ENCODE measurements at regions of chr19 and their contacts with region 1.

Region 1: GRCh38 chr19:39532233-39533002 is at the start of gene EID2B:
- DNase-seq: peak; percentile 91 to 97 (median 93)
- H3K4me3 ChIP-seq: peak within 1 kb of the TSS; percentile 95
- H3K4me3 Mint-ChIP-seq: peak within 1 kb of the TSS; percentile 89 to 100 (median 93)
- H3K27ac ChIP-seq: peak within 1 kb of the TSS; percentile 73
- H3K27ac Mint-ChIP-seq: peak within 1 kb of the TSS; percentile 79 to 96 (median 92)
- H3K4me1 ChIP-seq: peaks cover 14% of the 10 kb centered on the region
- H3K4me1 Mint-ChIP-seq: peaks cover 25 to 44% (median 39%) of the 10 kb centered on the region in 3 donors
- H3K27me3 ChIP-seq: no peaks in the 10 kb centered on the region
- H3K27me3 Mint-ChIP-seq: peaks cover 0 to 2% of the 10 kb centered on the region in 2 donors
- total RNA-seq, gene EID2B: 3.4 to 3.7 TPM

Region 2: DNA sequence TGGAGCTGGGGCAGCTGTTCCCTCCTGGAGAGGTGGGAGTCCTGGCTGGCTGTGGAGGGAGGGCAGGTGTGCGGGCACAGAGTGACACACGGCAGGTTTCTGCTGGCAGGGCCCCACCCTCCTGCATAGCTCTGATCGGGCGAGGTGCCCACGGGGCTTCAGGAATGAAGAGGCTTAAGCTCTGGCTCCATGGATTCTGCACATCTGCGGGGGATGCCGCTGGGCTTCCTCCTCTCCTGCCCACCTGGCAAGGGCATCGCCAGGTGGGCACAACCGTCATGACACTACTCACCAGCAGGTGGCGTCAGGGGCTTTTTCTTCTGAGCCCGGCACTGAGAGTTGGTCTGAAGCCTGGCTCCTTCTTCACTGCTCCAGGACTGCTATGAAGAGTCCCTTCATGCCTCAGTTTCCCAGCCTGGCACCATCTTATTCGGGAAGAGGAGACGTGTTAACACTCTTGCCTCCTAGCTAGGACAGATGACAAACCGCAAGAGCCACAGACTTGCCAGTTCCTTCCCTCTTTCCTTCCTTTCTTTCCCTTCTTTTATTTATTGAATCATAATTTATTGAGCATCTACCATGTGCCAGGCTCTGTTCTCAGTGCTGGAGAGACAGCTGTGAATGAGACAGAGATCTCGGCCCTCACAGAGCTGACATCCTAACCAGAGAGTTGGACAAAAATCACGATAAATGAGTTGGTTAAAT is 422.0 kb before region 1 on chr19:
- CTCF ChIA-PET with region 1: interaction called, 10 read pairs
- POLR2A ChIA-PET with region 1: no interaction called
- DNase-seq: peak; percentile 44 to 80 (median 64)
- H3K4me3 ChIP-seq: no peak overlapping the region
- H3K4me3 Mint-ChIP-seq: no peak overlapping the region
- H3K27ac ChIP-seq: no peak overlapping the region
- H3K27ac Mint-ChIP-seq: peak overlapping the region in 3 of 8 donors; percentile 17 to 61 (median 23)
- H3K4me1 ChIP-seq: no peaks in the 10 kb centered on the region
- H3K4me1 Mint-ChIP-seq: peaks cover 3 to 5% (median 4%) of the 10 kb centered on the region in 3 donors
- H3K27me3 ChIP-seq: no peaks in the 10 kb centered on the region
- H3K27me3 Mint-ChIP-seq: peaks cover 0 to 23% of the 10 kb centered on the region in 2 donors

Region 3: GRCh38 chr19:39445265-39446111 is 86.9 kb before region 1 on chr19 and contains the start of gene SUPT5H:
- CTCF ChIA-PET with region 1: interaction called, 18 read pairs
- POLR2A ChIA-PET with region 1: interaction called, 3 read pairs
- DNase-seq: peak; percentile 97 to 99 (median 98)
- H3K4me3 ChIP-seq: peak within 1 kb of the TSS; percentile 89
- H3K4me3 Mint-ChIP-seq: peak within 1 kb of the TSS; percentile 93 to 100 (median 99)
- H3K27ac ChIP-seq: peak within 1 kb of the TSS; percentile 95
- H3K27ac Mint-ChIP-seq: peak within 1 kb of the TSS; percentile 93 to 100 (median 100)
- H3K4me1 ChIP-seq: peaks cover 48% of the 10 kb centered on the region
- H3K4me1 Mint-ChIP-seq: peaks cover 50 to 60% (median 59%) of the 10 kb centered on the region in 3 donors
- H3K27me3 ChIP-seq: no peaks in the 10 kb centered on the region
- H3K27me3 Mint-ChIP-seq: no peaks in the 10 kb centered on the region
- total RNA-seq, gene SUPT5H: 190 to 196 TPM

Region 4: GRCh38 chr19:39474139-39474622 is 58.2 kb before region 1 on chr19:
- CTCF ChIA-PET with region 1: interaction called, 22 read pairs
- POLR2A ChIA-PET with region 1: no interaction called
- DNase-seq: peak; percentile 49 to 80 (median 57)
- H3K4me3 ChIP-seq: no peak overlapping the region
- H3K4me3 Mint-ChIP-seq: no peak overlapping the region
- H3K27ac ChIP-seq: no peak overlapping the region
- H3K27ac Mint-ChIP-seq: peak overlapping the region in 3 of 8 donors; percentile 27 to 82 (median 72)
- H3K4me1 ChIP-seq: no peaks in the 10 kb centered on the region
- H3K4me1 Mint-ChIP-seq: peaks cover 0 to 9% (median 0%) of the 10 kb centered on the region in 3 donors
- H3K27me3 ChIP-seq: no peaks in the 10 kb centered on the region
- H3K27me3 Mint-ChIP-seq: no peaks in the 10 kb centered on the region

Region 5: GRCh38 chr19:39492225-39492624 is 40.2 kb before region 1 on chr19:
- CTCF ChIA-PET with region 1: no interaction called
- POLR2A ChIA-PET with region 1: no interaction called
- DNase-seq: no peak
- H3K4me3 ChIP-seq: no peak overlapping the region
- H3K4me3 Mint-ChIP-seq: no peak overlapping the region
- H3K27ac ChIP-seq: no peak overlapping the region
- H3K27ac Mint-ChIP-seq: no peak overlapping the region
- H3K4me1 ChIP-seq: no peaks in the 10 kb centered on the region
- H3K4me1 Mint-ChIP-seq: no peaks in the 10 kb centered on the region
- H3K27me3 ChIP-seq: no peaks in the 10 kb centered on the region
- H3K27me3 Mint-ChIP-seq: peaks cover 6 to 9% of the 10 kb centered on the region in 2 donors

Region 6: GRCh38 chr19:39550197-39550596 is 17.8 kb after region 1 on chr19:
- CTCF ChIA-PET with region 1: interaction called, 10 read pairs
- POLR2A ChIA-PET with region 1: no interaction called
- DNase-seq: no peak
- H3K4me3 ChIP-seq: no peak overlapping the region
- H3K4me3 Mint-ChIP-seq: no peak overlapping the region
- H3K27ac ChIP-seq: no peak overlapping the region
- H3K27ac Mint-ChIP-seq: no peak overlapping the region
- H3K4me1 ChIP-seq: peaks cover 24% of the 10 kb centered on the region
- H3K4me1 Mint-ChIP-seq: peaks cover 0 to 10% (median 6%) of the 10 kb centered on the region in 3 donors
- H3K27me3 ChIP-seq: no peaks in the 10 kb centered on the region
- H3K27me3 Mint-ChIP-seq: peaks cover 2 to 8% of the 10 kb centered on the region in 2 donors

Measured in CD8-positive, alpha-beta memory T cell (primary cell).